ENCODE measurements at regions of chr11 and their contacts with region 1.

Region 1: GRCh38 chr11:121451986-121452608 is at the start of gene SORL1:
- DNase-seq: peak; percentile 66
- H3K4me3 Mint-ChIP-seq: peak within 1 kb of the TSS; percentile 90
- H3K27ac Mint-ChIP-seq: peak within 1 kb of the TSS; percentile 91
- H3K4me1 Mint-ChIP-seq: peaks cover 77% of the 10 kb centered on the region
- H3K27me3 Mint-ChIP-seq: no peaks in the 10 kb centered on the region
- total RNA-seq, gene SORL1: 20.2 and 20.3 TPM in 2 replicates

Region 2: GRCh38 chr11:121328967-121329679 is 123.0 kb before region 1 on chr11:
- intact Hi-C with region 1: loop called (anchors 5 kb)
- DNase-seq: no peak
- H3K4me3 Mint-ChIP-seq: no peak overlapping the region
- H3K27ac Mint-ChIP-seq: no peak overlapping the region
- H3K4me1 Mint-ChIP-seq: no peaks in the 10 kb centered on the region
- H3K27me3 Mint-ChIP-seq: peaks cover 12% of the 10 kb centered on the region

Region 3: GRCh38 chr11:121464352-121464946 is 12.4 kb after region 1 on chr11:
- intact Hi-C with region 1: loop called (anchors 1 kb)
- DNase-seq: peak; percentile 73
- H3K4me3 Mint-ChIP-seq: peak overlapping the region; percentile 11
- H3K27ac Mint-ChIP-seq: peak overlapping the region; percentile 92
- H3K4me1 Mint-ChIP-seq: peaks cover 86% of the 10 kb centered on the region
- H3K27me3 Mint-ChIP-seq: no peaks in the 10 kb centered on the region

Region 4: DNA sequence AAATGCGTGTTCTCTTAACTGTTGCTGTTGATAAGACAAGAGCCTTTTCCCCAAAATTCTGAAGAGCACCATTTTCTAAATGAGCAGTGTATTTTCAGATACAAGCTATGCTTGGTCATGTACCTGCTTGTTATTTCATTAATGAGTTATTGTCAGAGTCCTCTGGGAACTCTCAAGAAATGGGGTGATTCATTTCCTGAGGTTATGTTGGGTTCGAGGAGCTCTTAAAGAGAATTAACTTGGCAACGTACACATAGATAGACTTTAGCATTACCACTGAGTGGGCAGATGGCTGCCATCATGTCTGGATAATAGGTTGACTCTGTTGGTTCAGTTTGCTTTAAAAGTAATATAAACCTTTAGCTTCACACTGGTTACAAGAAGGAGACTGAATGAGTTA is 88.5 kb after region 1 on chr11:
- intact Hi-C with region 1: loop called (anchors 5 kb)
- DNase-seq: no peak
- H3K4me3 Mint-ChIP-seq: no peak overlapping the region
- H3K27ac Mint-ChIP-seq: no peak overlapping the region
- H3K4me1 Mint-ChIP-seq: peaks cover 33% of the 10 kb centered on the region
- H3K27me3 Mint-ChIP-seq: no peaks in the 10 kb centered on the region

Measured in activated T-helper 2 cell treated with anti-CD3 and anti-CD28 coated beads, Interferon-gamma antibody, Interleukin-2, Interleukin-4, amounts not matched to agents 10 μg/mL and 5 μg/mL and 100 μg/mL, durations not matched to agents 14 hours and 24 hours and 36 hours (primary cell).